PC-9 (cell line): ENCODE measurements at regions of chr14 and their contacts with region 1.

Region 1: GRCh38 chr14:77707724-77708408 is at the starts of genes ALKBH1 and SLIRP:
- DNase-seq: peak; percentile 88 to 92
- H3K4me3 ChIP-seq: peak within 1 kb of the TSS; percentile 74
- H3K27ac ChIP-seq: peak within 1 kb of the TSS; percentile 27
- H3K4me1 ChIP-seq: peaks cover 25% of the 10 kb centered on the region
- H3K27me3 ChIP-seq: no peaks in the 10 kb centered on the region
- CTCF ChIP-seq: no peak; the same call in 1 of the 2 replicates
- total RNA-seq, gene ALKBH1: 22.7 and 25.0 TPM in 2 replicates
- total RNA-seq, gene SLIRP: 298 and 375 TPM in 2 replicates

Region 2: DNA sequence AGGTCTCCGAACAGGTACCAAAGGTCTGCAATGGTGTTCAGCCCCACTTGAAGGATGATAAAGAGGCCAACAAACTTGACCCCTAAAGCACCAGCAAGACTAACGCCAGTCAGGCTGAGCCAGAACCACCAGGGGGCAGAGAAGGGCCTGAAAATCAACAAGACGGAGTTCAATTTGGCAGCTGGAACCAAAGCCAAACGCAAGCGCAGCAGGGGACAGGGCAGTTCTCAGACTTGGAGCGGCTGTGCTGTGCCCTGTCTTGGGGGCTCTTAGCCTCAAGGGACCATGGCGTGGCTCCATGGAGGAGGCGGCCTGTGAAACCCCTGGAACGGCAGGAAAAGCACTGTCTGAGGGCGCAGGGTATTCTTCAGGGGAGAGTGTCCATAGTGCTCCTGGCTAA is 406.8 kb before region 1 on chr14:
- CTCF ChIA-PET with region 1: no interaction called
- POLR2A ChIA-PET with region 1: no interaction called
- intact Hi-C with region 1: loop called (anchors 5 kb)
- DNase-seq: peak in 1 of 2 experiments; percentile 49
- H3K4me3 ChIP-seq: no peak overlapping the region
- H3K27ac ChIP-seq: no peak overlapping the region
- H3K4me1 ChIP-seq: peaks cover 32% of the 10 kb centered on the region
- H3K27me3 ChIP-seq: no peaks in the 10 kb centered on the region
- CTCF ChIP-seq: peak; percentile 86

Region 3: DNA sequence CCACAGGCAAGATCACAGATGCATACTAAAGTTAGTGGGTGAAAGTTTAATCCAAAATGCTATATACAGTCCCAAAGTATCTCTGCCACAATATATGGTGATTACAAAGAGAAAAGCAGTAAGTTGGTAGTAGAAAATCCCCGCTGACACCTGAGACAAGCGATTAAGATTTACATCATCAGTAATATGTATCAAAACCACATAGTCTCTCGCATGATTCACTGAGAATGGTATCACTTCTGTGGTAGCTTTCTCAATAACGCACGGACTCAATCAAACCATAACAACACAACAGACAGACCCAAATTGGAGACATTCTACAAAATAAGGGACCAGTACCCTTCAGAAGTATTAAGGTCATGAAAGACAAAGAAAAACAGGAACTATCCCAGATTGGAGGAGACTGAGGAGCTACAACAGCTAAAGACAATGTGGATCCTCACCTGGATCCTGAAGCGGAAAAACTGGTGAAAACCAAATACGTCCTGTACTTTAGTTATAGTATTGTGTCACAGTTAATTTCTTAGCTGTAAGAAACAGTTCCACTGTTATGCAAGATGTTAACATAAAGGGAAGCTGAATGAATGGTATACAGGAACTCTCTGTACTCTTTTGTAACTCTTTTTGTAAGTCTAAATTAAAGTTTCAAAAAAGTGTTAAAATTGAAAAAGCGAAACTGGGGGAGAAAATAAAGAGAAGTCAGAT is 142.4 kb before region 1 on chr14:
- CTCF ChIA-PET with region 1: interaction called, 8 read pairs
- POLR2A ChIA-PET with region 1: no interaction called
- intact Hi-C with region 1: loop called (anchors 5 kb)
- DNase-seq: no peak
- H3K4me3 ChIP-seq: no peak overlapping the region
- H3K27ac ChIP-seq: 0 out of 2 replicates have a peak overlapping the region, but pooled peaks have one; percentile 7
- H3K4me1 ChIP-seq: no peaks in the 10 kb centered on the region
- H3K27me3 ChIP-seq: no peaks in the 10 kb centered on the region
- CTCF ChIP-seq: no peak

Region 4: DNA sequence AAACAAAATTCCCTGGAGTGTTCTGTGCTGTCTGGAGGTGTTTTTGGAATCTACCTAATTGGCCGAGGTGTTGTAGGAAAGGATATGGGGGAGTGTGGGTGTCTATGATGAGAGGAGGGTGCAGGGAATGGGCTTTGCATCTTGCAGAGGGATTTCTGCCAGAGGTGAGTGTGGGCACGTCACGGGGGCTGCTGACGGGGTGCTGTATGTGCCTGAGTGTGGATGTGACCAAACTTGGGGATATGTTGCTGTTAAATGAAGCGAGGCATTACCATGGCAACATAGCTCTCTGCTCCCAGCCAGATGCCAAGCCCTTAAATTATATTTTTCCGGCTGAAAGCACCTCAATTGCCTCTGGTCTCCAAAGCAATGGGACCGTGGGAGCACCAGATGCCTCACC is 47.1 kb before region 1 on chr14:
- CTCF ChIA-PET with region 1: no interaction called
- POLR2A ChIA-PET with region 1: no interaction called
- intact Hi-C with region 1: loop called (anchors 1 kb)
- DNase-seq: no peak
- H3K4me3 ChIP-seq: no peak overlapping the region
- H3K27ac ChIP-seq: no peak overlapping the region
- H3K4me1 ChIP-seq: peaks cover 14% of the 10 kb centered on the region
- H3K27me3 ChIP-seq: no peaks in the 10 kb centered on the region
- CTCF ChIP-seq: no peak

Region 5: DNA sequence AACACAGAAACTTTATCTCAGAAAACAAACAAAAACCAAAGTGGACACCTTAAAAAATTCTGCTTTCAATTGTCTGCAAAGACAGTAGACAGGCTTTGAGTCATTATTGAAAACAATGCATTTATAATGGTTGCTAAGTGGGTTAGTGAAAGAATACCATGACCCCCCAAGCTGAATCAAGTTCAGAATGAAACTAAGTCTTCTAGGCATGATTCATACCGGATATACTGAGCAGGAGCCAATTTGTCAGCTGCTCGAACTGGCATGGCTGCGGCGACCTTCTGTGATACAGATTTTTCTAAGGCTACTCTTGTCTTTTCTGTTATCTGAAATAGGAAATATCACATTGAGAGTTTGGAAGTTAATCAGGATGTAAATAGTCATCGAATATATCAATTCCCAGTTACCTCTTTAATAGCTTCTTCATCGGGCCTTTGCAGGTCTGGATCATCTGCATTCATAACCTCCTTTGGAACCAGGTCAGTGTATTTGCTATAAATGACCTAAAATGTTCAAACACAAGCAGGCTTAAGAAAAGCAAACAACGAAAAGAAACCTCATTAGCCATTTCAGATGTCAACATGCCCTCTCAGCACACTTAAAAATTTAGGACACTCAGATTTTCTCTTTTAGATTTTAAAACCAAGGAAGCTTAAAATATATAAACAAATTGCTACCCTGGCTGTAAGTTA is 30.8 kb after region 1 on chr14:
- CTCF ChIA-PET with region 1: no interaction called
- POLR2A ChIA-PET with region 1: interaction called, 21 read pairs
- intact Hi-C with region 1: no loop called
- DNase-seq: no peak
- H3K4me3 ChIP-seq: no peak overlapping the region
- H3K27ac ChIP-seq: no peak overlapping the region
- H3K4me1 ChIP-seq: no peaks in the 10 kb centered on the region
- H3K27me3 ChIP-seq: no peaks in the 10 kb centered on the region
- CTCF ChIP-seq: no peak

Region 6: DNA sequence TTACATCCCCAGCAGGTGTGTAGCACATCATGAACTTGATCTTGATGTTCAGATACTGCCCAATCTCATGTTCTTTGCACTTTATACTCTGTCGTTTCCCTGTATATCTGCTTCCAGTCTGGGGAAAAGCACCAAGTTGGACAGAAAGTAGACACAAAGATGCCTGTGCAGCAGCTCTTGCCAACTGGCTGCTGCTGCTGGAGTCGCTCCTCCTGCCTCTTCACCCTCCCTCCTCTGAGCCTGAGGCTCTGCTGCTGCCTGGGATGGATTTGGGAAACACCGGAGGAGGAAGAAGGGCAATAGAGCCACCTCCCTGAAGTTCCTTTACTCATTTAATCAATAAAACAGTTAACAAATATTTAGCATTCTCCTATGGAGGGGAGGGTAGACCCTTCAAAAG is 124.4 kb after region 1 on chr14:
- CTCF ChIA-PET with region 1: no interaction called
- POLR2A ChIA-PET with region 1: no interaction called
- intact Hi-C with region 1: no loop called
- DNase-seq: no peak
- H3K4me3 ChIP-seq: no peak overlapping the region
- H3K27ac ChIP-seq: no peak overlapping the region
- H3K4me1 ChIP-seq: 0 out of 2 replicates have a peak, but pooled peaks cover 8% of the 10 kb centered on the region
- H3K27me3 ChIP-seq: no peaks in the 10 kb centered on the region
- CTCF ChIP-seq: no peak